ENCODE measurements at regions of chrX and their contacts with region 1.

Region 1: DNA sequence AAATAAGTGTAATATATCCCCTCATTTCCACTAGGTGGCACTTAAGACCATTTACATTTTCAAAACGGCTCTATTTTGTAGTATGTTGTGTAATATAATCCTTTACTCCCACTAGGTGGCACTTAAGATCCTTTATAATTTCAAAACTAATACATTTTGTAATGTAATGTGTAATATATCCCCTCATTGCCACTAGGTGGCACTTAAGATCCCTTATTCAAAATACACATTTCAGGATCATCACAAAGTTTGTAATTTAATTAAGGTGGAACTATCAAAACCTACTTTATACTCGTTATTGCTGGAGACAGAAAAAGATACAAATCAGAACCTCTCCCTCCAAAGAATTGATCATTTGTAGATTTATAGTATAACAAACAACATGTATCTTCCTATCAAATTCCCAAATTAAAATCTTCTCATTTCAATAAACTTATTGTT is 132.5 kb downstream of the ARHGAP6 start:
- DNase-seq: peak in 2 of 4 donors; percentile 59 to 72
- ATAC-seq: peak; percentile 97
- H3K4me3 ChIP-seq: no peak overlapping the region
- H3K27ac ChIP-seq: no peak overlapping the region
- H3K4me1 ChIP-seq: no peaks in the 10 kb centered on the region
- H3K27me3 ChIP-seq: no peaks in the 10 kb centered on the region
- CTCF ChIP-seq: peak; percentile 57 to 91

Region 2: GRCh38 chrX:11143931-11144678 is 389.1 kb before region 1 on chrX:
- intact Hi-C with region 1: loop called in 1 of 2 experiments (anchors 10 kb)
- DNase-seq: peak in 3 of 4 donors; percentile 42 to 82 (median 68)
- ATAC-seq: peak; percentile 94
- H3K4me3 ChIP-seq: no peak overlapping the region
- H3K27ac ChIP-seq: no peak overlapping the region
- H3K4me1 ChIP-seq: no peaks in the 10 kb centered on the region
- H3K27me3 ChIP-seq: peaks cover 3 to 9% of the 10 kb centered on the region in 2 donors
- CTCF ChIP-seq: peak; percentile 58 to 62

Region 3: DNA sequence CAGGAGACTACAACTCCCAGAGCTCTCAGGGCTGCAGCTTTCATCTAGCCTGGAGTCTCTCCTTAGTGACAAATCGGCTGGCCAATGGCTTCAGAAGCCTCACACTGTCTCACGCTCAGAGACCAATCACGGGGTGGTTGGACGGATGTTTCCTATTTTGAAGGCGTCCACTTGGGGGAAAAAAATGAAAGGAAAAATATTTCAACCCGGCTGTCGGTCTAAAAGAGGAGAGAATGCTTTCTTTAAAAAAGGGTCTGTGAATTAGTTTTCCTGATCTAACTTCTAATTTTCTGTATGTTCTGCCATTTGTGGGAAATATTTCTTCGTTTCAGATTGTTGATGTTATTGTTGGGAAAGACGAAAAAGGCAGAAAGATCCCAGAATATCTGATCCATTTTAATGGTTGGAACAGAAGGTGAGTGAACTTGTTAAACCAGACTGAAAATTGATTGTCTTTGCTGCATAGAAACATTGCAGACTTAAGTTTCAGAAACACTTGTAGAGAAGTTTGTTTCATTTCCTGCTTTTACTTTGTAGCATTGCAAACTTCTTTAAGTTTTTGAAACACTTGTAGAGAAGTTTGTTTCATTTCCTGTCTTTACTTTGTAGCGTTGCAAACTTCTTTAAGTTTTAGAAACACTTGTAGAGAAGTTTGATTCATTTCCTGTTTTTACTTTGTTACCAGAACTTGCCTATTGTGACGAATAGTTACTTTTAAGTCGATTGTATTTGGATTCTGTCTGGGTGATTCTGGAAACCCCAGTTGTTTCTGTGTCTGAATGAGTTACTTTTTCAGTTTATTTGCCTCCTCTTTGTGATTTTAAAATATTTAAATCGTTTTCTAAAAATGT is 226.5 kb after region 1 on chrX:
- intact Hi-C with region 1: loop called in 1 of 2 experiments (anchors 10 kb)
- DNase-seq: peak in 3 of 4 donors; percentile 75 to 92 (median 86)
- ATAC-seq: peak; percentile 90
- H3K4me3 ChIP-seq: peak overlapping the region; percentile 49 to 61
- H3K27ac ChIP-seq: peak overlapping the region; percentile 83 to 95
- H3K4me1 ChIP-seq: peaks cover 0 to 18% of the 10 kb centered on the region in 2 donors
- H3K27me3 ChIP-seq: no peaks in the 10 kb centered on the region
- CTCF ChIP-seq: peak in 1 of 2 donors; percentile 18

Measured in left lung (tissue), 14 donors.